MCF 10A (cell line): ENCODE measurements at regions of chr6 and their contacts with region 1.

Region 1: GRCh38 chr6:10510592-10511367 is 10.4 kb upstream of the GCNT2 start:
- DNase-seq: peak; percentile 67
- H3K4me3 Mint-ChIP-seq: no peak overlapping the region
- H3K27ac Mint-ChIP-seq: no peak overlapping the region
- H3K4me1 Mint-ChIP-seq: peaks cover 6% of the 10 kb centered on the region
- H3K27me3 Mint-ChIP-seq: no peaks in the 10 kb centered on the region
- CTCF ChIP-seq: peak; percentile 71

Region 2: GRCh38 chr6:10048370-10049298 is 462.1 kb before region 1 on chr6:
- CTCF ChIA-PET with region 1: no interaction called
- POLR2A ChIA-PET with region 1: no interaction called
- intact Hi-C with region 1: no loop called
- DNase-seq: no peak
- H3K4me3 Mint-ChIP-seq: no peak overlapping the region
- H3K27ac Mint-ChIP-seq: no peak overlapping the region
- H3K4me1 Mint-ChIP-seq: no peaks in the 10 kb centered on the region
- H3K27me3 Mint-ChIP-seq: no peaks in the 10 kb centered on the region
- CTCF ChIP-seq: no peak

Region 3: DNA sequence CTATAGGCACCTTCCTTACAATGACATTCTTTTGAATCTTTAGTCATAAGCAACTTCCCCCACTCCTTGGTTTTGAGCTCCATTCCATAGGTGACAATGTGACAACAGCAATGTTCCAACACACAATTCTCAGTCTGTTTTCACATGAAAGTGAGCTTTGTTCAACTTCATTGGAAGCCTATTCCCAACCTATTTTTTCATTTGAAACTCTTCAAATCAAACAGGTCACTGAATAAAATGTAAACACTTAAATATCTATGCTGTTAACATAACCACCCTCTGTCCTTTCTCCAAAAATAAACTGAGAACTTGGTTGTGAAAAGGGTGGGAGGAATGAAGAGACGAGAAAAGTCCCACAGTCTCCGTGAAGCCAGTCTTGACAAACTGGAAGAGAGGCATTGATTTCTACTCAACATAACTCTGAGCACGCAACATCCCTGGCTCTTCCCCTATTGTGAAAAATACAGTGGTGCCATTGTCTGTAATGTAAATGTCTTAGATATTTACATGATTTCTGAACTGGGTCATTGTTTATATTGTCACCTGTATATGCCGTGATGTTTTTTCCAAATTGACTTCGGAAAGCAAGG is 439.1 kb before region 1 on chr6:
- CTCF ChIA-PET with region 1: no interaction called
- POLR2A ChIA-PET with region 1: no interaction called
- intact Hi-C with region 1: no loop called
- DNase-seq: no peak
- H3K4me3 Mint-ChIP-seq: no peak overlapping the region
- H3K27ac Mint-ChIP-seq: no peak overlapping the region
- H3K4me1 Mint-ChIP-seq: no peaks in the 10 kb centered on the region
- H3K27me3 Mint-ChIP-seq: no peaks in the 10 kb centered on the region
- CTCF ChIP-seq: no peak

Region 4: GRCh38 chr6:10347561-10348327 is 163.0 kb before region 1 on chr6:
- CTCF ChIA-PET with region 1: no interaction called
- POLR2A ChIA-PET with region 1: no interaction called
- intact Hi-C with region 1: no loop called
- DNase-seq: peak; percentile 87
- H3K4me3 Mint-ChIP-seq: no peak overlapping the region
- H3K27ac Mint-ChIP-seq: peak overlapping the region; percentile 59
- H3K4me1 Mint-ChIP-seq: peaks cover 12% of the 10 kb centered on the region
- H3K27me3 Mint-ChIP-seq: no peaks in the 10 kb centered on the region
- CTCF ChIP-seq: no peak

Region 5: GRCh38 chr6:10437891-10438290 is 72.9 kb before region 1 on chr6:
- CTCF ChIA-PET with region 1: no interaction called
- POLR2A ChIA-PET with region 1: no interaction called
- intact Hi-C with region 1: no loop called
- DNase-seq: no peak
- H3K4me3 Mint-ChIP-seq: no peak overlapping the region
- H3K27ac Mint-ChIP-seq: no peak overlapping the region
- H3K4me1 Mint-ChIP-seq: peaks cover 34% of the 10 kb centered on the region
- H3K27me3 Mint-ChIP-seq: no peaks in the 10 kb centered on the region
- CTCF ChIP-seq: no peak

Region 6: GRCh38 chr6:10522929-10523573 is 12.3 kb after region 1 on chr6:
- CTCF ChIA-PET with region 1: interaction called, 10 read pairs
- POLR2A ChIA-PET with region 1: interaction called, 4 read pairs
- intact Hi-C with region 1: no loop called
- DNase-seq: no peak
- H3K4me3 Mint-ChIP-seq: no peak overlapping the region
- H3K27ac Mint-ChIP-seq: no peak overlapping the region
- H3K4me1 Mint-ChIP-seq: peaks cover 6% of the 10 kb centered on the region
- H3K27me3 Mint-ChIP-seq: no peaks in the 10 kb centered on the region
- CTCF ChIP-seq: no peak

Region 7: DNA sequence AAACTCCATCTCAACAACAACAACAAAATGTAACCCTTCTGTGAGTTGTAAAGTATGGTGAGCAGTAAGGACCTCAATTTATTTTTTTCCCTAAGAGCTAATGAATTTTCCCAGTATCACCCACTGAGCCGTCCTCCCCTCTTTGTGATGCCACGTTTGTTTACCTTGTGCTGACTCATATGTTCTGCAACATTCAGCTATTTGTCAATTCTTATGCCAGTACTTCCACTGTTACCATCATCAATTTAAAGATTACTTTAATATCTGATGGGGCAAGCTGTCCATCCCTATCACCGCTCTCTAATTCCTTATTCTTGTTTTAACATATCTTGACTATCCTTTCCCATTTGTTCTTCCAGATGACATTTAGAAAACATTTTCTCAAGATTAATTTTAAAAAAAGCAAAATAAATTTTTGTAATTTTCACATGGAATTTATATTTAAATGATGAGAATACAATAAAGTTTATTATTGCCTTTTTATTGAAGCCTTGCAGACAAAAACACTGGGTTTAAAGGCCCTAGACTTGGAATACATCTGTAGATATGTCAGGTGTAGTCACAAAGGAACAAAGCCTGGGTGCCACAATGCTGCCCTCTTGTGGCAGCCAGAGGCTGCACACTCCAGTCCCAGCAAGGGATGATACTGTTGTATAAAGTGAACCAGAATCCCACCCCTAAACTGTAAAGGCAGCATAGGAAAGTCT is 290.2 kb after region 1 on chr6:
- CTCF ChIA-PET with region 1: interaction called, 38 read pairs
- POLR2A ChIA-PET with region 1: no interaction called
- intact Hi-C with region 1: loop called (anchors 1 kb)
- DNase-seq: peak; percentile 76
- H3K4me3 Mint-ChIP-seq: no peak overlapping the region
- H3K27ac Mint-ChIP-seq: peak overlapping the region; percentile 57
- H3K4me1 Mint-ChIP-seq: peaks cover 8% of the 10 kb centered on the region
- H3K27me3 Mint-ChIP-seq: no peaks in the 10 kb centered on the region
- CTCF ChIP-seq: peak; percentile 96